Spleen (tissue), 13 donors: ENCODE measurements at regions of chr6 and their contacts with region 1.

Region 1: DNA sequence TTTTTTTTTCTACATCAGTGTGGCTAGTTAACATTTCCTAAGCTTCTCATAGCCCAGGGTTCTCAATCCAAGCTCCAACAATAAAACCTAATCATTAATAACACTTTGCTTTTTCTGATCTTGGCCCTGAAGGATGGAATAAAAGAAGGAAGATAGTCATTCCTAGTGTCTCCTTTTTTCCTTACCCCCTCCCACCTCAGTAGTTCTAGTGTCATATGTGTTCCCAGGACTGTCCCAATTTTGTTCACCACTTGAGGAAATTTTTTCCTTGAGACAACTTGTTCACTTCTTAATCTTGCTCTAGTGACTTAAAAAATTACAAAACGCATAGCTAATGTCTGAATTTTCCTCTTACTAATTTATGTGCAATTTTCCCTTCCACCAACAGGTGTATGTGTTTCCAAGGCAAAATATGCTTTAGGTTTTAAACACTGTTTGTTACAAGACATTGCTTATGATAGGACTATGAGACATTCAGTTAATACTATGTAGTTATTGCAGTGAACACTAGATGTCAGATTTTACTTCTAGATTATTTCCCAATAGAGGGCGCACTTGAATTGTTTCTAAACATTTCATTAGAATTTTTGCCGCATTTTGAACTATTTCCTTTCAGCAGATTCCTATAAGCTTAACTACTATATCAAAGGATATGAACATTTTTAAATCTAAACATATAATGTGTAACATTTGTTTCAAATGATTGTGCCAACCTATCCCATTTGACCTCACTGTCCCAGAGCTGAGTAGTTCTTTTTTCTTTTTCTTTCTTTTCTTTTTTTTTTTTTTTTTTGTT is 18.5 kb upstream of the C6orf141 start:
- DNase-seq: no peak
- H3K4me3 ChIP-seq: peak overlapping the region in 1 of 8 donors; percentile 23
- H3K27ac ChIP-seq: no peak overlapping the region
- H3K4me1 ChIP-seq: no peaks in the 10 kb centered on the region
- H3K27me3 ChIP-seq: peaks cover 0 to 1% (median 0%) of the 10 kb centered on the region in 7 donors
- CTCF ChIP-seq: peak in 9 of 11 experiments; percentile 30 to 67 (median 56)
- POLR2A ChIP-seq: no peak

Region 2: GRCh38 chr6:49582529-49582928 is 50.6 kb after region 1 on chr6:
- intact Hi-C with region 1: no loop called
- DNase-seq: no peak
- H3K4me3 ChIP-seq: no peak overlapping the region
- H3K27ac ChIP-seq: no peak overlapping the region
- H3K4me1 ChIP-seq: no peaks in the 10 kb centered on the region
- H3K27me3 ChIP-seq: no peaks in the 10 kb centered on the region
- CTCF ChIP-seq: no peak
- POLR2A ChIP-seq: no peak

Region 3: GRCh38 chr6:49606696-49607390 is 74.9 kb after region 1 on chr6:
- intact Hi-C with region 1: loop called (anchors 10 kb)
- DNase-seq: no peak
- H3K4me3 ChIP-seq: no peak overlapping the region
- H3K27ac ChIP-seq: no peak overlapping the region
- H3K4me1 ChIP-seq: no peaks in the 10 kb centered on the region
- H3K27me3 ChIP-seq: no peaks in the 10 kb centered on the region
- CTCF ChIP-seq: peak; percentile 35 to 71 (median 60)
- POLR2A ChIP-seq: no peak

Region 4: GRCh38 chr6:49849213-49849907 is 317.4 kb after region 1 on chr6:
- intact Hi-C with region 1: loop called (anchors 5 kb)
- DNase-seq: no peak
- H3K4me3 ChIP-seq: no peak overlapping the region
- H3K27ac ChIP-seq: no peak overlapping the region
- H3K4me1 ChIP-seq: no peaks in the 10 kb centered on the region
- H3K27me3 ChIP-seq: no peaks in the 10 kb centered on the region
- CTCF ChIP-seq: peak; percentile 21 to 72 (median 61)
- POLR2A ChIP-seq: no peak